ENCODE measurements at regions of chr9 and their contacts with region 1.

Region 1: DNA sequence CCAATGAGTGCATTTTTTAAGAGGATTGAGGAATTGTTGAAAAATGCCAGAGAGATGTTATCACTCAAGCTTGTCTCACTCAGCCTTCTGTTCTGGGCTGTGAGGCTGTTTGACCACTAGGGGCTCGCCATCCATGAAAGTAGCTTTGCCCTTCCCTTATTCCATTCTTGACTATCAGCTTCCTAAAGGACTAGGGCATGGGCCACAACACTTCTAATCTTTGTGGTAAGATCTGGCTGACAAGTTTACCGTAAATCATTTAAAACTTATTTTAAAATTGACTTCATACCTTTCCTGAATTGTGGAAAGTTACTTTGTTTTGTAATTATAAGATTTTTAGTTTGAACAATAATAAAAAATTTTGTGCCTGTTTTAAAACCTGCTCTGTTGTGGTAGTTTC is 49.5 kb downstream of the TJP2 start:
- DNase-seq: peak; percentile 38
- H3K4me3 ChIP-seq: no peak overlapping the region
- CTCF ChIP-seq: peak; percentile 82

Region 2: DNA sequence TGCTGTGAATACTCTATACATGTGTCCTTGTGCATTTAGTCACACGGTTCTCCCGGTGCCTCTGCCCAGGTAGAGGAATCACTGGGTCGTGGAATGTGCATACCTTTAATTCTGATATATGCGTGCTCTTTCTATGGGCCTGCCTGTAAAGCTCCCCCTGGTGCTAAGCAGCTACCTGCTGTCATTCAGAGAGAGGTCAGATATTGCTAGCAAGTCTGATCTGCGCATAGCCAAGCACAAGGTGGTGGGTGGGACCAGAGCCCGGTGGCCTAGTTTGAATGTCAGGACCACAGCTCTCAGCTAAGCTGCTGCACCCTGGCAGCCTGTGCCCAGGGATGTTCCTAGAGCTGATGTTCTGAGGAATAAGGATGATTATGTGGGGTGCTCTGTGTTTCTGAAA is 16.1 kb before region 1 on chr9:
- CTCF ChIA-PET with region 1: interaction called, 31 read pairs
- POLR2A ChIA-PET with region 1: no interaction called
- DNase-seq: no peak
- H3K4me3 ChIP-seq: no peak overlapping the region
- CTCF ChIP-seq: no peak

Region 3: DNA sequence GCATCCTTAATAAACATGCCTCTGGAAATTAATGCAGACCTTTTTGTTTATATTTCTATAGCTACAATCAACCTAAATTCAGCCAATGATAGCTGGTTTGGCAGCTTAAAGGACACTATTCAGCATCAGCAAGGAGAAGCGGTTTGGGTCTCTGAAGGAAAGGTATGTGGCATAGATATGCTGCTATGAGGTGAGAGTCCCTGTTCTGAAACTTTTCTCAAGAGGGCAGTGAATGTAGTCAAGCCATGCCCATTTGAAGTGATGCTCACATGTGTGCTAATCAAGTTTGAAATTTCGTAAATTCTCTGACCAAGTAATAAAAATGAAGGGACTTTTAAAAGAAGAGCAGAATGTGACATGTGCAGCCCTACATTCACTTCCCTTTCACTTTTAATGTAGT is 23.0 kb after region 1 on chr9:
- CTCF ChIA-PET with region 1: interaction called, 13 read pairs
- POLR2A ChIA-PET with region 1: no interaction called
- DNase-seq: no peak
- H3K4me3 ChIP-seq: no peak overlapping the region
- CTCF ChIP-seq: no peak

Region 4: GRCh38 chr9:69421908-69422801 is 198.6 kb after region 1 on chr9:
- CTCF ChIA-PET with region 1: no interaction called
- POLR2A ChIA-PET with region 1: no interaction called
- DNase-seq: no peak
- H3K4me3 ChIP-seq: no peak overlapping the region
- CTCF ChIP-seq: peak; percentile 69